ENCODE measurements at regions of chr16 and their contacts with region 1.

Region 1: DNA sequence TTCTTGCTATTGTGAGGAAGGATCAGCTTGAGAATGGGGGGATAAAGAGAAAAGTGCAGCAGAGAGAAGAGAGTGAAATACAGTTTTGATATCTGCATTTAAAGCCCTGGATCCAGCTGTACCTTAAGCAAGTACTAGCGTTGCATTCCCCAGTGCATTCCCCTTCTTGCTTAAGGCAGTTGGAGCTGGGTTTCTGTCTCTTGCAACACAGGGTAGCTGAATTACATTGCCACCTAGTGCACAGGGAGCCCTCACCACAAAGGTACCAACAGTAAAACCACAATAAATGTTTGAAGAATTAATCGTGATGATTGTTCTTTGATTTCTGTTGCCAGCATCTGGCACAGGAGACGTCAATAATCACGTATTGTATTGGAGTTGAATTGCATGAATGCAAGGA is 588.7 kb downstream of the RBFOX1 start:
- DNase-seq: no peak
- H3K4me3 ChIP-seq: no peak overlapping the region
- H3K27ac ChIP-seq: no peak overlapping the region
- H3K4me1 ChIP-seq: no peaks in the 10 kb centered on the region
- H3K27me3 ChIP-seq: no peaks in the 10 kb centered on the region
- CTCF ChIP-seq: no peak

Region 2: DNA sequence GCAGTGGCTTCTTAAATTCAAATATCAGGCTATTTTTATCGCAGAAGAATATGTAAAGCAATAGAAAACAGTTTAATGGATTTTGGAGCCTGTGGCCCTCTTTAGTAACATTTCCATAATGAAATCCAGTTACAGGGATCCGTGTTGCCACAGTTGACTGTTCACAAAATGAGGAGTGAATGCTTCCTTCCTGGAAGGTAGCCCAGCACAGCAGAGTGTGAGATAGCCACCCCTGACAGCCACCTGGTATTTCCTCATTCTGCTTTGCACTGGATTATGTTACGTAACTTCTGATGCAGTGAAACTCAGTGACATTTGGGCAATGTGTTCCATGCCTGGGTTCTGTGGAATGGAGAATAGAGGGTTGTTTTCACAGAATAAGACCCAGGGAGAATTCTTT is 71.5 kb before region 1 on chr16:
- CTCF ChIA-PET with region 1: no interaction called
- dilution Hi-C with region 1: no loop called
- in situ Hi-C with region 1: no loop called
- intact Hi-C with region 1: no loop called
- DNase-seq: no peak
- H3K4me3 ChIP-seq: no peak overlapping the region
- H3K27ac ChIP-seq: no peak overlapping the region
- H3K4me1 ChIP-seq: no peaks in the 10 kb centered on the region
- H3K27me3 ChIP-seq: no peaks in the 10 kb centered on the region
- CTCF ChIP-seq: no peak

Region 3: GRCh38 chr16:7867831-7868230 is 53.5 kb before region 1 on chr16:
- CTCF ChIA-PET with region 1: no interaction called
- dilution Hi-C with region 1: loop called (anchors 5 kb)
- in situ Hi-C with region 1: no loop called
- intact Hi-C with region 1: no loop called
- DNase-seq: no peak
- H3K4me3 ChIP-seq: no peak overlapping the region
- H3K27ac ChIP-seq: no peak overlapping the region
- H3K4me1 ChIP-seq: no peaks in the 10 kb centered on the region
- H3K27me3 ChIP-seq: no peaks in the 10 kb centered on the region
- CTCF ChIP-seq: no peak

Region 4: GRCh38 chr16:8026450-8026849 is 105.1 kb after region 1 on chr16:
- CTCF ChIA-PET with region 1: no interaction called
- dilution Hi-C with region 1: no loop called
- in situ Hi-C with region 1: no loop called
- intact Hi-C with region 1: no loop called
- DNase-seq: no peak
- H3K4me3 ChIP-seq: no peak overlapping the region
- H3K27ac ChIP-seq: no peak overlapping the region
- H3K4me1 ChIP-seq: no peaks in the 10 kb centered on the region
- H3K27me3 ChIP-seq: no peaks in the 10 kb centered on the region
- CTCF ChIP-seq: no peak

Measured in mammary epithelial cell (primary cell).